ENCODE measurements at regions of chr2 and their contacts with region 1.

Region 1: GRCh38 chr2:177169810-177170514 is 42.6 kb upstream of the HNRNPA3 start:
- DNase-seq: no peak
- H3K4me3 ChIP-seq: no peak overlapping the region
- H3K27ac ChIP-seq: no peak overlapping the region
- H3K4me1 ChIP-seq: peaks cover 0 to 7% of the 10 kb centered on the region in 2 donors
- H3K27me3 ChIP-seq: no peaks in the 10 kb centered on the region
- CTCF ChIP-seq: no peak
- POLR2A ChIP-seq: no peak

Region 2: GRCh38 chr2:177207101-177207500 is 37.1 kb after region 1 on chr2:
- intact Hi-C with region 1: loop called (anchors 5 kb)
- DNase-seq: no peak
- H3K4me3 ChIP-seq: no peak overlapping the region
- H3K27ac ChIP-seq: no peak overlapping the region
- H3K4me1 ChIP-seq: no peaks in the 10 kb centered on the region
- H3K27me3 ChIP-seq: no peaks in the 10 kb centered on the region
- CTCF ChIP-seq: no peak
- POLR2A ChIP-seq: no peak

Region 3: DNA sequence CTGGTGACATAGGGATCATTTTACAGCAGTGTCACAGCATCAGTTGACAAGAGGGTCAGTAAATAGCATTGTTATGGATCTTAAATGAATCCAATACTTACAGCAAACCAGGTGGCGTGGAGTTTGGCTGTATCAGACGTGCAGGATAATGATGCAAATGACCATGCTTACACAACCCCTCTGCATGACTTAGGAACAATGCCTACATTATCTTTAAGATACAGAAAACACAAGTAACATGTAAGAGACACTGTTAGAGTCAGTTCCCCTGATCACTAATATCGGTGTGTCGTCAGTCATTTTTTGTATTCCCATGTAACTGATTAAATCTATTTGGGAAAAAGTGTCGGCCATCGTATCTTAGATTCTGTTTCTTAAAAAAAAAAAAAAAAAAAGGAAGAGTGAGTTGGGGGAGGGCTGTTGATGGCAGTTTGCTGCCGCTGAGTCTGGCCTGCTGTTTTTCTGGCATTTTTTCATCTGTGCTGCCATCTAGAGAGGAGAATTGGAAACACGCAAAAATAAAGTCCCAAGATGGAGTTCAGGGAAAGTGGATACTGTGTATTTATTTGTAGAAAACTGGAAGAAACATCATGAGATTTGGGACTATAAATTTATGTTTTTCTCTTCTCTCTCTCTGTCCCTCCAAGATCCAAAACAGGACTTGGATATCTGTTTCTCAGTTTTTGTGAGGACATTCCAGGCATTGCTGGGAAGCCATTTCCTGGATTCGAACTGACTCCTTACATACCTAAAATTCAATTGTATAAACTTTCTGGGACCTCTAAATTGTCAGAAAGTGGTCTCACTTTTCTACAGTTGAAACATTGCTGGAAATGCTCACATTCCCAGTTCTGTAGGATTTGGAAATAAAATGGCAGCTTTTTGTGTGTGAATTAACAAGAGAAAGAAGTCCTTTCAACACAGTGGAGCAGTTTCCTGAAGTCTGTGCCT is 162.4 kb after region 1 on chr2:
- intact Hi-C with region 1: loop called (anchors 5 kb)
- DNase-seq: peak; percentile 47 to 68
- H3K4me3 ChIP-seq: no peak overlapping the region
- H3K27ac ChIP-seq: peak overlapping the region; percentile 56 to 65
- H3K4me1 ChIP-seq: no peaks in the 10 kb centered on the region
- H3K27me3 ChIP-seq: no peaks in the 10 kb centered on the region
- CTCF ChIP-seq: peak; percentile 66 to 77 (median 74)
- POLR2A ChIP-seq: no peak

Region 4: GRCh38 chr2:177413703-177414102 is 243.7 kb after region 1 on chr2:
- intact Hi-C with region 1: no loop called
- DNase-seq: no peak
- H3K4me3 ChIP-seq: no peak overlapping the region
- H3K27ac ChIP-seq: no peak overlapping the region
- H3K4me1 ChIP-seq: peaks cover 0 to 5% of the 10 kb centered on the region in 2 donors
- H3K27me3 ChIP-seq: no peaks in the 10 kb centered on the region
- CTCF ChIP-seq: no peak
- POLR2A ChIP-seq: no peak

Region 5: GRCh38 chr2:177731384-177731783 is 561.4 kb after region 1 on chr2:
- intact Hi-C with region 1: loop called (anchors 10 kb)
- DNase-seq: no peak
- H3K4me3 ChIP-seq: no peak overlapping the region
- H3K27ac ChIP-seq: no peak overlapping the region
- H3K4me1 ChIP-seq: no peaks in the 10 kb centered on the region
- H3K27me3 ChIP-seq: no peaks in the 10 kb centered on the region
- CTCF ChIP-seq: no peak
- POLR2A ChIP-seq: no peak